T-cell (primary cell): ENCODE measurements at regions of chr1 and their contacts with region 1.

Region 1: DNA sequence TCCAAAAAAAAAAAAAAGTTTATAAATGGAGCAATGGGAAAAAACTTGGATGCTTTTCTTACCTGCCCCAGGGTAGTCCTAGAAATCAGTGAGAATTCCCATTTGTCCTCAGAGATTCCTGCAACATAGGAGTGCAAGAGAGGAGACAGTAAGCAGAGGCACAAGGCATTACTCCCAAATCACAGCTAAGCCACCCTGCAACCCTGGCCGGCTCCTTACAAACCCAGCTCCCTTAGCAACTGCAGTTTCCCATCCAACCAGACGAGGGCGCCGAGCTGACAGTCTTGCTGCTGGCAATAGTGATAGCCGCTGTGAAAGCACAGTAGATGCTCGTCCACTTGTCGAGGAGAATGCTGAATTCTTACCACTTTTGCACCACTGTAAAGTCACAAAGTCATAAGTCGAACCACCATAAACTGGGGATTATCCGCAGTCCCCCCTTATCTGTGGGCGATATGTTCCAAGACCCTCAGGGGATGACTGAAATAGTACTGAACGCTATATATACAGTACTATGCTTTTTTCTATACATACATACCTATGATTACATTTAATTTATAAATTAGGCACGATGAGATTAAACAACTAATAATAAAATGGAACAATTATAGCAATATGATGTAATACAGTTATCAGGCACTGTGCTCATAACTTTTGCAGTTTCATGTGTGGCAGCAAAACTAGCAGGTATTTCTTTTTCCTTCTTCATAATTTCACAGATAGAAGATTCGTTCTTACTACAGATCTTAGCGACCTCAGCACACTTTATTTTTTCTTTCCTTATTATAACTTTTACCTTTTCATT is 6.0 kb upstream of the PITHD1 start:
- DNase-seq: peak; percentile 61 to 89 (median 79)
- ATAC-seq: peak; percentile 92 to 97 (median 94)
- H3K4me3 ChIP-seq: no peak overlapping the region
- H3K4me3 Mint-ChIP-seq: no peak overlapping the region
- H3K27ac ChIP-seq: no peak overlapping the region
- H3K27ac Mint-ChIP-seq: no peak overlapping the region
- H3K4me1 ChIP-seq: peaks cover 2 to 8% of the 10 kb centered on the region in 2 experiments
- H3K4me1 Mint-ChIP-seq: peaks cover 8 to 27% (median 26%) of the 10 kb centered on the region in 3 donors
- H3K27me3 ChIP-seq: no peaks in the 10 kb centered on the region
- H3K27me3 Mint-ChIP-seq: no peaks in the 10 kb centered on the region

Region 2: GRCh38 chr1:23634842-23635651 is 137.2 kb before region 1 on chr1:
- CTCF ChIA-PET with region 1: no interaction called
- POLR2A ChIA-PET with region 1: no interaction called
- DNase-seq: peak in 31 of 35 experiments; percentile 17 to 83 (median 42)
- ATAC-seq: peak; percentile 74 to 88 (median 82)
- H3K4me3 ChIP-seq: peak overlapping the region; percentile 22 to 62
- H3K4me3 Mint-ChIP-seq: peak overlapping the region; percentile 64 to 72 (median 67)
- H3K27ac ChIP-seq: peak overlapping the region; percentile 34
- H3K27ac Mint-ChIP-seq: peak overlapping the region; percentile 91
- H3K4me1 ChIP-seq: peaks cover 16 to 25% of the 10 kb centered on the region in 2 experiments
- H3K4me1 Mint-ChIP-seq: peaks cover 34 to 41% (median 40%) of the 10 kb centered on the region in 3 donors
- H3K27me3 ChIP-seq: peaks cover 0 to 15% of the 10 kb centered on the region in 2 experiments
- H3K27me3 Mint-ChIP-seq: no peaks in the 10 kb centered on the region

Region 3: GRCh38 chr1:23757812-23758211 is 14.4 kb before region 1 on chr1:
- CTCF ChIA-PET with region 1: no interaction called
- POLR2A ChIA-PET with region 1: interaction called, 3 to 10 read pairs
- DNase-seq: no peak
- ATAC-seq: no peak
- H3K4me3 ChIP-seq: no peak overlapping the region
- H3K4me3 Mint-ChIP-seq: no peak overlapping the region
- H3K27ac ChIP-seq: no peak overlapping the region
- H3K27ac Mint-ChIP-seq: no peak overlapping the region
- H3K4me1 ChIP-seq: no peaks in the 10 kb centered on the region
- H3K4me1 Mint-ChIP-seq: peaks cover 2 to 5% (median 2%) of the 10 kb centered on the region in 3 donors
- H3K27me3 ChIP-seq: no peaks in the 10 kb centered on the region
- H3K27me3 Mint-ChIP-seq: no peaks in the 10 kb centered on the region

Region 4: GRCh38 chr1:23916209-23917131 is 144.2 kb after region 1 on chr1:
- CTCF ChIA-PET with region 1: interaction called, 5 to 24 read pairs
- POLR2A ChIA-PET with region 1: no interaction called
- DNase-seq: peak in 34 of 35 experiments; percentile 18 to 78 (median 53)
- ATAC-seq: peak; percentile 77 to 97 (median 85)
- H3K4me3 ChIP-seq: no peak overlapping the region
- H3K4me3 Mint-ChIP-seq: no peak overlapping the region
- H3K27ac ChIP-seq: no peak overlapping the region
- H3K27ac Mint-ChIP-seq: no peak overlapping the region
- H3K4me1 ChIP-seq: peaks cover 8 to 39% of the 10 kb centered on the region in 2 experiments
- H3K4me1 Mint-ChIP-seq: peaks cover 30 to 36% (median 32%) of the 10 kb centered on the region in 3 donors
- H3K27me3 ChIP-seq: no peaks in the 10 kb centered on the region
- H3K27me3 Mint-ChIP-seq: no peaks in the 10 kb centered on the region

Region 5: GRCh38 chr1:24403806-24404205 is 631.6 kb after region 1 on chr1:
- CTCF ChIA-PET with region 1: interaction called in 1 of 2 experiments, 13 read pairs
- POLR2A ChIA-PET with region 1: no interaction called
- DNase-seq: no peak
- ATAC-seq: no peak
- H3K4me3 ChIP-seq: no peak overlapping the region
- H3K4me3 Mint-ChIP-seq: no peak overlapping the region
- H3K27ac ChIP-seq: no peak overlapping the region
- H3K27ac Mint-ChIP-seq: no peak overlapping the region
- H3K4me1 ChIP-seq: no peaks in the 10 kb centered on the region
- H3K4me1 Mint-ChIP-seq: no peaks in the 10 kb centered on the region
- H3K27me3 ChIP-seq: no peaks in the 10 kb centered on the region
- H3K27me3 Mint-ChIP-seq: no peaks in the 10 kb centered on the region